ENCODE measurements at regions of chr7 and their contacts with region 1.

Region 1: DNA sequence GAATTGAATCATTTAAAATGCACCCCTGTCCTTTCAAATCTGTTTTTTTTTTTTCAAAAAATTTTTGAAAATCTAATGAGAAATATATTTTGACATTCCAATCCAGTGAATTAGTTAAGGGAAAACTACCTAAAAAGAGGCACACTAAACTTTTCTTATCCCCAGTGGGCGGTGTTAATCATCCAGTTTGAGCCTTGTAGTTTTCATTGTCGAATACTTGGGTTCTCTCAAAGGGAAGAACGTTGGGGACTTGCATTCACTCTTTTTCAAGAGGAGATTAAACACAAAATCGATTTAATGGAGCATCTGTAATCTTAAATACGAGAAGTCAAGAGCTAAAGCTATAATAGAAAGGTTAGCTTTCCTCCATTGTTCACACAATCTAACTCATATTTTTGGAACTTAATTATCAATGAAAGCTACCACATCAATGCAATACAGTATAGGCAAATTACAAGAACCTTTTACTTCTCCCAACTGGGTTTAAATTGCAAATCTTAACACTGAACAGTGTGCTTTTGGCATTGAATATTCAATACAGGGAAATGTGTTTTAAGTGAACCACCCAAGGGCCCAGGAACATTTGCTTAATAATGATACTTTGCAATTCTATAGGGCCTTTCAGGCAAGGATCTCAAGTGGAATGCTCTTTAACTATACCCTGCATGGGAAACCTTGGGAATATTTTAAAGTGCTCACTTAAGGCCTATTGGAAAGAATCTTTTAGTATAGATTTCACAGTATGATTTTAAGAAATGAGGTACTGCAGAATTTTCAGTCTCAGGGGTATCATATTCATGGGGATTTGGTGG is 13.1 kb upstream of the SP8 start:
- DNase-seq: no peak
- ATAC-seq: no peak
- H3K4me3 ChIP-seq: no peak overlapping the region
- H3K27ac ChIP-seq: no peak overlapping the region
- H3K4me1 ChIP-seq: no peaks in the 10 kb centered on the region
- H3K27me3 ChIP-seq: peaks cover 10 to 62% (median 24%) of the 10 kb centered on the region in 3 donors
- CTCF ChIP-seq: no peak

Region 2: DNA sequence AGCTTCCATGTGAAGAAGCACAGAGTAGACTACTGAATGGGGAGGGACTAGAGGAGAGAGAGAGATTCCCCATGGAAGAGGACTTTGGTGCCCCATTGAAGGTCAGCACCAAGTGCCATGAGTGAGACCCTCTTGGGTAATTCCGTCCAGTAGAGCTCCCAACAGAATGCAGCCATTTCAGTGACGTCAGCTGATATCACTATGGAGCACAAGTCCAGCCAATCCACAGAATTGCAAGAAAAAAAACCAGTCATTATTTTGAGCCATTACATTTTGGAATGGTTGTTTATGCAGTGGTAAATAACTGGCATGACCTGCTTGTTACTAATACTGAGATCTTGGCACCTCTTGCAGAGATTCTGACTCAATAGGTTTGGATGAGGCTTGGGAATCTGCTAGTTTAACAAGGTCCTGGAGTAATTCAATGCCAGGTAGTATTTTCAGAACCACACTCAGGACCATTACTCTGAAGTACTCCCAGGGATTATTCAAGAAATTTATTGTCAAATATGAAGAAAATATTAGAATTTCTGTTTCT is 39.5 kb after region 1 on chr7:
- intact Hi-C with region 1: no loop called
- DNase-seq: no peak
- ATAC-seq: no peak
- H3K4me3 ChIP-seq: no peak overlapping the region
- H3K27ac ChIP-seq: no peak overlapping the region
- H3K4me1 ChIP-seq: no peaks in the 10 kb centered on the region
- H3K27me3 ChIP-seq: no peaks in the 10 kb centered on the region
- CTCF ChIP-seq: no peak

Region 3: GRCh38 chr7:20858951-20859350 is 59.2 kb after region 1 on chr7:
- intact Hi-C with region 1: loop called in 1 of 2 experiments (anchors 5 kb)
- DNase-seq: no peak
- ATAC-seq: no peak
- H3K4me3 ChIP-seq: no peak overlapping the region
- H3K27ac ChIP-seq: no peak overlapping the region
- H3K4me1 ChIP-seq: no peaks in the 10 kb centered on the region
- H3K27me3 ChIP-seq: no peaks in the 10 kb centered on the region
- CTCF ChIP-seq: no peak

Region 4: DNA sequence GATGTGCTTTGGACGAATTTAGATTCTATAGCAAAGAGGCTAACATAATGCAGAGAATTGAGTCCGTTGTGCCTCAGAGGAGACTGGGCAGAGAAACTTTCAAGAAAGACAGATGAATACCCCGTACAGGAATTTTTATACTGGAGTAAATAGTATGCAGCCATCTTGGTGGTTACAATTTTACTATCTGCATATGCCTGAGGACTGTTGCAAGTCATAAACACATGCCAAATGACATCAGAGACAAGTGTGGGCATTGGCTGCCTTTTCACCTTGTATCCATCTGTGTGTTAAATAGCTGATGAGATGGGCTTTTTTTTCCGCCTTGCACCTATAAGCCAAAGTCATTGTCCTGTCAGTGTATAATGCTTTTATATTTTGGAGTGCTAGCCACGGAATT is 360.6 kb after region 1 on chr7:
- intact Hi-C with region 1: no loop called
- DNase-seq: no peak
- ATAC-seq: no peak
- H3K4me3 ChIP-seq: no peak overlapping the region
- H3K27ac ChIP-seq: no peak overlapping the region
- H3K4me1 ChIP-seq: no peaks in the 10 kb centered on the region
- H3K27me3 ChIP-seq: peaks cover 0 to under 1% (median 0%) of the 10 kb centered on the region in 3 donors
- CTCF ChIP-seq: no peak

Measured in psoas muscle (tissue), 8 donors.